CD4-positive, alpha-beta T cell (primary cell): ENCODE measurements at regions of chr2 and their contacts with region 1.

Region 1: DNA sequence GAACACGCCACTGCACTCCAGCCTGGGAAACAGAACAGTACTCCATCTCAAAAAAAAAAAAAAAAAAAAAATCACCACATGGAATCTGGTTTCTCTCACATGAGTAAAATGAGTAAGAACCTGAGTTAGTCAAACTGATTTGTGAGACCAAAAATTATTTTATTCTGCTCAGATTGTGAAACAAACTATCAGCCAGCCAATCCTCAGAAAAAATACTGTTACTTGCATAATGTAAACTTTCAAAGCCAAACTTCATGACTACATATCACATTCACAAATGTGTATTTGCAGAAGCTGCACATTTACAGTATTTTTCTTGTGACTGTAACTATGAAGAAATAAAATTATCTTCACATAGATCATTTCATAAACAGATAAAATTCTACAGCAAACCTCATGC is 23.2 kb downstream of the SUMO1 start:
- DNase-seq: no peak
- ATAC-seq: no peak
- H3K4me3 ChIP-seq: no peak overlapping the region
- H3K4me3 Mint-ChIP-seq: no peak overlapping the region
- H3K27ac ChIP-seq: no peak overlapping the region
- H3K27ac Mint-ChIP-seq: no peak overlapping the region
- H3K4me1 ChIP-seq: no peaks in the 10 kb centered on the region
- H3K4me1 Mint-ChIP-seq: peaks cover 16% of the 10 kb centered on the region
- H3K27me3 ChIP-seq: no peaks in the 10 kb centered on the region
- H3K27me3 Mint-ChIP-seq: no peaks in the 10 kb centered on the region
- CTCF ChIP-seq: no peak

Region 2: GRCh38 chr2:201218780-201219179 is 996.4 kb before region 1 on chr2:
- CTCF ChIA-PET with region 1: no interaction called
- POLR2A ChIA-PET with region 1: no interaction called
- intact Hi-C with region 1: no loop called
- DNase-seq: no peak
- ATAC-seq: no peak
- H3K4me3 ChIP-seq: no peak overlapping the region
- H3K4me3 Mint-ChIP-seq: no peak overlapping the region
- H3K27ac ChIP-seq: no peak overlapping the region
- H3K27ac Mint-ChIP-seq: peak overlapping the region; percentile 81
- H3K4me1 ChIP-seq: peaks cover 26% of the 10 kb centered on the region
- H3K4me1 Mint-ChIP-seq: peaks cover 59% of the 10 kb centered on the region
- H3K27me3 ChIP-seq: no peaks in the 10 kb centered on the region
- H3K27me3 Mint-ChIP-seq: no peaks in the 10 kb centered on the region
- CTCF ChIP-seq: no peak

Region 3: GRCh38 chr2:202278944-202279343 is 63.8 kb after region 1 on chr2:
- CTCF ChIA-PET with region 1: no interaction called
- POLR2A ChIA-PET with region 1: no interaction called
- intact Hi-C with region 1: no loop called
- DNase-seq: peak in 2 of 14 experiments; percentile 25 to 32
- ATAC-seq: peak; percentile 40
- H3K4me3 ChIP-seq: no peak overlapping the region
- H3K4me3 Mint-ChIP-seq: no peak overlapping the region
- H3K27ac ChIP-seq: no peak overlapping the region
- H3K27ac Mint-ChIP-seq: peak overlapping the region; percentile 50
- H3K4me1 ChIP-seq: peaks cover 3% of the 10 kb centered on the region
- H3K4me1 Mint-ChIP-seq: peaks cover 23% of the 10 kb centered on the region
- H3K27me3 ChIP-seq: no peaks in the 10 kb centered on the region
- H3K27me3 Mint-ChIP-seq: no peaks in the 10 kb centered on the region
- CTCF ChIP-seq: peak; percentile 46

Region 4: GRCh38 chr2:202290970-202291369 is 75.8 kb after region 1 on chr2:
- CTCF ChIA-PET with region 1: no interaction called
- POLR2A ChIA-PET with region 1: no interaction called
- intact Hi-C with region 1: loop called in 1 of 2 experiments (anchors 5 kb)
- DNase-seq: no peak
- ATAC-seq: no peak
- H3K4me3 ChIP-seq: no peak overlapping the region
- H3K4me3 Mint-ChIP-seq: no peak overlapping the region
- H3K27ac ChIP-seq: no peak overlapping the region
- H3K27ac Mint-ChIP-seq: no peak overlapping the region
- H3K4me1 ChIP-seq: no peaks in the 10 kb centered on the region
- H3K4me1 Mint-ChIP-seq: no peaks in the 10 kb centered on the region
- H3K27me3 ChIP-seq: no peaks in the 10 kb centered on the region
- H3K27me3 Mint-ChIP-seq: no peaks in the 10 kb centered on the region
- CTCF ChIP-seq: no peak